ENCODE measurements at regions of chr22 and their contacts with region 1.

Region 1: GRCh38 chr22:37623075-37624016 is 14.7 kb downstream of the GGA1 start:
- DNase-seq: peak; percentile 65
- H3K4me3 ChIP-seq: no peak overlapping the region
- H3K27ac ChIP-seq: no peak overlapping the region
- H3K4me1 ChIP-seq: no peaks in the 10 kb centered on the region
- H3K27me3 ChIP-seq: no peaks in the 10 kb centered on the region

Region 2: GRCh38 chr22:37386441-37386840 is 236.9 kb before region 1 on chr22:
- in situ Hi-C with region 1: no loop called
- DNase-seq: no peak
- H3K4me3 ChIP-seq: no peak overlapping the region
- H3K27ac ChIP-seq: no peak overlapping the region
- H3K4me1 ChIP-seq: no peaks in the 10 kb centered on the region
- H3K27me3 ChIP-seq: no peaks in the 10 kb centered on the region; the same call in 1 of the 2 replicates

Region 3: DNA sequence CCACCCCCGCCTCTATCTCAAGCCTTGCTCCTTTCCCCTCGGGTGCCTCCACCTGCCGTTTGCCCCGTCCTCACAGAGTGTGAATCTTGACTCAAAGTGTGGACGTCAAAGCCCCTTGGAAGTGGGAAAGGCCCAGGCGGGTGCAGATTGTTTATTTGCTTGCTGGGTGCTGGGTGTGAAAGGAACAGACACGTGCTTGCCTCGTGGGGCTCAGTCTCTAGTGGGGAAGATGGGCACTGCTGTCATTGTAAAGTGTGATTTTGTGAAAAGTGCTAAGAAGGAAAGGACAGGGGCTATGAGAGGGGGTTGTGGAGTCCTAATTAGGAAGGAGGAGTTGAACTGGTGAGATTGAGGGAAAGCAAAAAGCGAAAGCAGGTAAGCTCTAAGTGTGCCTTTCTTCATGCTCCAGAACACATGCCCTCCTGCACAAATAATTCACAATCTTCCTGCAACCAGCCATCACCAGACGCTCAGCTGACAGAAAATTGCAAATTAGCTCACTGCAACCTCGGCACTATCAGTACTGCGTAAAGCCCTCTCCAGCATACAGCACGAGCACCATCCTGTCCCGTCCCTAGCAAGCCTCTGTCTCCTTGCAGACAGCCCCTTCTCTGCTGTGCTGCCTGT is 174.6 kb after region 1 on chr22:
- in situ Hi-C with region 1: loop called (anchors 10 kb)
- DNase-seq: no peak
- H3K4me3 ChIP-seq: no peak overlapping the region
- H3K27ac ChIP-seq: no peak overlapping the region
- H3K4me1 ChIP-seq: no peaks in the 10 kb centered on the region
- H3K27me3 ChIP-seq: no peaks in the 10 kb centered on the region

Measured in GM23248 (cell line).